Motor neuron (in vitro differentiated cells): ENCODE measurements at regions of chr16 and their contacts with region 1.

Region 1: GRCh38 chr16:23182460-23183309 is at the start of gene SCNN1G:
- ATAC-seq: peak; percentile 96 to 99 (median 98)
- H3K4me3 ChIP-seq: peak within 1 kb of the TSS; percentile 29 to 37 (median 34)
- H3K27ac ChIP-seq: no peak within 1 kb of the TSS
- H3K4me1 ChIP-seq: peaks cover 0 to 3% of the 10 kb centered on the region in 2 donors
- total RNA-seq, gene SCNN1G: under 0.01 to 0.19 (median 0.10) TPM in 5 of 8 experiments, not detected in the others

Region 2: GRCh38 chr16:22684574-22685458 is 497.9 kb before region 1 on chr16:
- in situ Hi-C with region 1: no loop called
- ATAC-seq: peak in 2 of 8 experiments; percentile 62 to 75
- H3K4me3 ChIP-seq: no peak overlapping the region
- H3K27ac ChIP-seq: no peak overlapping the region
- H3K4me1 ChIP-seq: peaks cover 0 to 5% of the 10 kb centered on the region in 2 donors

Region 3: GRCh38 chr16:23296994-23297393 is 114.3 kb after region 1 on chr16:
- in situ Hi-C with region 1: no loop called
- ATAC-seq: peak in 3 of 8 experiments; percentile 25 to 32 (median 31)
- H3K4me3 ChIP-seq: no peak overlapping the region
- H3K27ac ChIP-seq: no peak overlapping the region
- H3K4me1 ChIP-seq: no peaks in the 10 kb centered on the region

Region 4: GRCh38 chr16:23423496-23424049 is 240.9 kb after region 1 on chr16:
- in situ Hi-C with region 1: loop called in 6 of 9 experiments (anchors 25 kb)
- ATAC-seq: peak in 5 of 8 experiments; percentile 21 to 88 (median 66)
- H3K4me3 ChIP-seq: no peak overlapping the region
- H3K27ac ChIP-seq: no peak overlapping the region
- H3K4me1 ChIP-seq: no peaks in the 10 kb centered on the region

Region 5: GRCh38 chr16:23435500-23435899 is 252.8 kb after region 1 on chr16:
- in situ Hi-C with region 1: loop called in 5 of 9 experiments (anchors 25 kb)
- ATAC-seq: peak in 4 of 8 experiments; percentile 35 to 96 (median 88)
- H3K4me3 ChIP-seq: no peak overlapping the region
- H3K27ac ChIP-seq: no peak overlapping the region
- H3K4me1 ChIP-seq: no peaks in the 10 kb centered on the region

Region 6: GRCh38 chr16:24041826-24042631 is 859.3 kb after region 1 on chr16:
- in situ Hi-C with region 1: loop called in 1 of 9 experiments (anchors 25 kb)
- ATAC-seq: peak; percentile 35 to 92 (median 54)
- H3K4me3 ChIP-seq: no peak overlapping the region
- H3K27ac ChIP-seq: no peak overlapping the region
- H3K4me1 ChIP-seq: no peaks in the 10 kb centered on the region